ENCODE measurements at regions of chr2 and their contacts with region 1.

Region 1: DNA sequence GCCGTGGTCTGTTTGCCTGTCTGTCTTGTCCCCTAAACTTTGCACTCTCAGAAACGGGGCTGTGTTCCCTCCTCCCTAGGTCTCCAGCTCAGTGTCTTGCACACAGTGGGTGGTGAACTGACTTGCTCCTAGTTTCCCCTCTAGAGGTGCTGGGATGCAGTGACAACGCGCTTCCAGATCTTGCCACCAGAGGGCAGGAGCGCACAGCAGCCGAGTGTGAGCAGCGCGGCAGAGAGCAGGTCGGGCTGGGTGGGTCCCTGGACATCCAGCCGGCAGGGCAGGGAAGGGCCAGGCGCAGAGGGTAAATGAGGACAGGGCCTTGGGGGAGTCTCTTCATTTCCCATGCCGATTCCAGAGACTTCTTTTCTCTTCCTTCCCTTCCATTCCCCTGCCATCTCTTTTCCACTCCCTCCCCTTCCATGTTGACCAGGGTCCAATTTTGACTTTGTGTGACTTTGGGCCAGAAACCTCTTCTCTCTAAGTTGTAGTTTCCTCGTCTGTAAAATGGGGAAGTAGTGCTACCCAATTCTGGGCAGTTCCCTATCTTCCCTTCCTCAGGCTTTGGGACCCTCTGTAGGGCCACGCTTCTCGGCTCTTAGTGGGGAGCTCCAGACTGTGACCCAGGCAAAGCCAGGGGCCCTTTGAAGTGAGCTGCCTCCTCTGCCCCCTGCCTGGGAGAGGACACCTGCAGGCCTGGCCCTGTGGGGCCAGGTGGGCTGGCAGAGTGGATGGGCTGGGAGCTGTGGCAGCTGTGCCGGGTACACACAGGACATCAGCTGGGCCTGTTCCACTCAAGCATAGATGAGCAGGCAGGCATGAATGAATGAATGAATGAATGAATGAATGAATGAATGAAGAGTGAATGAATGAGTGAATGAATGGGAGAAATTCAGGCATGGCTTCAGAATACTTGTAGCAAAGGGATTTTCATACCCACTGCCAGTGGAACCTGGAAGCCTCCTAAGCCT is 43.3 kb upstream of the TAF1B start:
- DNase-seq: peak; percentile 85 to 93
- ATAC-seq: peak; percentile 75 to 92
- H3K4me3 ChIP-seq: no peak overlapping the region
- H3K27ac ChIP-seq: peak overlapping the region; percentile 34 to 87; a peak in 5 of 6 replicates
- H3K4me1 ChIP-seq: peaks cover 30% of the 10 kb centered on the region
- CTCF ChIP-seq: peak; percentile 98
- EP300 ChIP-seq: no peak
- POLR2A ChIP-seq: no peak
- RAD21 ChIP-seq: peak; percentile 92 to 97

Region 2: DNA sequence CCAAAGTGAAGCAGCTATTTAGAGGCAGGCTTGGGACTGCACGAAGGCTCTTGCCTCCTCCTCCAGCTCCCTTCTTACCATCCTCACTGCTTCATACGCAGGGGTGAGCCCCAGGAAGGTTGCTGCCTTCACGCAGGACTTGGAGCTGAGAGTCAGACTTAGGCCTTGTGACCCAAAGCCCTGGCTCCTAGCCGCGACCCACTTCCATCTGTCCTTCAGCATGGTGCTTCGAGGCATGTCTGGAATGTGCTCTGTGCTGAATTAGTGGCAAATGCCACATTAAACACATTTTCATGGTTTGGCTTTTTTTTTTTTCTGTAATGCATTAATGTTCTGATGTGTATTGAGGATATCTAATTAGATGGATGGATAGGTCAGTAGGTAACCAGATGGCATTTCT is 414.1 kb before region 1 on chr2:
- CTCF ChIA-PET with region 1: no interaction called
- POLR2A ChIA-PET with region 1: no interaction called
- DNase-seq: no peak
- ATAC-seq: no peak
- H3K4me3 ChIP-seq: no peak overlapping the region
- H3K27ac ChIP-seq: peak overlapping the region; percentile 63 to 76
- H3K4me1 ChIP-seq: peaks cover 63% of the 10 kb centered on the region
- CTCF ChIP-seq: no peak
- EP300 ChIP-seq: no peak
- POLR2A ChIP-seq: no peak
- RAD21 ChIP-seq: no peak

Region 3: DNA sequence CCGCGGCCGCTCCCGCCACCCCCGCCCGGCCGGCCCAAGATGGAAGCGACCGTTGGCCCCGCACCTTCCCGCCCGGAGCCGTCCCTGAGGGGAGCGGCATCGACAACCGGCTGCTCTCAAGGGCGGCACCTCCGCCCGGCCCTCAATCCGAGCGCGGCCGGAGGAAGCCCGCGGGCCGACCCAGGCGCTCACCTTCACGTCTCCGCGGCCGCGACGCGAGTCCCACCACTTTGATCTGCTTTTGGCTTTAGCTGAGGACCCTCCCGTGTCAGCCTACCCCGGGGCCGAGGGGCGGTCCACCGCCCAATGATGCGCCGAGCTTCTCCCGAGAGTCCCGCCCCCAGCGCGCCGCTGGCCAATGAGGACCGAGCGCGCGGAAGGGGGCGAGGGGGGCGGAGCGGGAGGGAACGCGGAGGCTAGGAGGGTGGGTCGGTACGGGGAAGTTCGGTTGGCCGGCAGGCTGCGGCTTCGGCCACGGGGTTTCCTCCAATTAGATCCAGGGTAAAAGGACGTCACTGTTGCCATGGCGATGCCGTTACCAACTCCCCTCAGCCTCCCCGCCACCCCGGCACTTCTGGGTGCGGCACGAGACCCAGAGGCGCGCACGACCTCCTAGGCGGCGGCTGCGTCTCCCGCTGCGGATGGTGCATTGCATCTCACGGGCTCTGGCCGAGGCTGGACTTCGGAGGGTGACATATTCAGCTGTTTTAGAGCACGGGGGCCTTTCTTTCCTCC is 169.0 kb before region 1 on chr2 and contains the start of gene YWHAQ:
- CTCF ChIA-PET with region 1: interaction called, 13 read pairs
- POLR2A ChIA-PET with region 1: interaction called, 5 read pairs
- DNase-seq: peak; percentile 99
- ATAC-seq: peak; percentile 88 to 94
- H3K4me3 ChIP-seq: peak within 1 kb of the TSS; percentile 93
- H3K27ac ChIP-seq: peak within 1 kb of the TSS; percentile 96 to 97
- H3K4me1 ChIP-seq: peaks cover 40% of the 10 kb centered on the region
- CTCF ChIP-seq: no peak
- EP300 ChIP-seq: no peak
- POLR2A ChIP-seq: peak; percentile 98
- RAD21 ChIP-seq: peak; percentile 22 to 40; a peak in 3 of 5 replicates
- polyA plus RNA-seq, gene YWHAQ: 672 and 833 TPM in 2 replicates

Region 4: GRCh38 chr2:9675415-9676351 is 124.3 kb before region 1 on chr2:
- CTCF ChIA-PET with region 1: no interaction called
- POLR2A ChIA-PET with region 1: no interaction called
- DNase-seq: peak; percentile 65 to 83
- ATAC-seq: peak; percentile 88 to 89
- H3K4me3 ChIP-seq: peak overlapping the region; percentile 19; the same call in 2 of the 3 replicates
- H3K27ac ChIP-seq: peak overlapping the region; percentile 79 to 85
- H3K4me1 ChIP-seq: peaks cover 30% of the 10 kb centered on the region
- CTCF ChIP-seq: no peak
- EP300 ChIP-seq: no peak
- POLR2A ChIP-seq: no peak
- RAD21 ChIP-seq: 0 out of 5 replicates have a peak, but pooled peaks of 1 of the 2 experiments have one; percentile 22

Region 5: GRCh38 chr2:9720352-9721093 is 79.4 kb before region 1 on chr2:
- CTCF ChIA-PET with region 1: no interaction called
- POLR2A ChIA-PET with region 1: no interaction called
- DNase-seq: no peak
- ATAC-seq: no peak
- H3K4me3 ChIP-seq: no peak overlapping the region
- H3K27ac ChIP-seq: no peak overlapping the region
- H3K4me1 ChIP-seq: no peaks in the 10 kb centered on the region
- CTCF ChIP-seq: no peak
- EP300 ChIP-seq: no peak
- POLR2A ChIP-seq: no peak
- RAD21 ChIP-seq: no peak

Region 6: GRCh38 chr2:9778012-9778411 is 21.9 kb before region 1 on chr2:
- CTCF ChIA-PET with region 1: interaction called, 202 read pairs
- POLR2A ChIA-PET with region 1: no interaction called
- DNase-seq: peak; percentile 45 to 56
- ATAC-seq: peak; percentile 61 to 85; a peak in 5 of 6 replicates
- H3K4me3 ChIP-seq: no peak overlapping the region
- H3K27ac ChIP-seq: no peak overlapping the region
- H3K4me1 ChIP-seq: 0 out of 3 replicates have a peak, but pooled peaks cover 4% of the 10 kb centered on the region
- CTCF ChIP-seq: peak; percentile 21; the same call in 1 of the 3 replicates
- EP300 ChIP-seq: no peak
- POLR2A ChIP-seq: no peak
- RAD21 ChIP-seq: peak; percentile 29 to 31; a peak in 2 of 5 replicates

Region 7: GRCh38 chr2:9843229-9844035 is 43.5 kb after region 1 on chr2 and contains the start of gene TAF1B:
- CTCF ChIA-PET with region 1: interaction called, 22 read pairs
- POLR2A ChIA-PET with region 1: interaction called, 10 read pairs
- DNase-seq: peak; percentile 95 to 96
- ATAC-seq: peak; percentile 96 to 97
- H3K4me3 ChIP-seq: peak within 1 kb of the TSS; percentile 73
- H3K27ac ChIP-seq: peak within 1 kb of the TSS; percentile 95
- H3K4me1 ChIP-seq: peaks cover 18% of the 10 kb centered on the region; the same call in 2 of the 3 replicates
- CTCF ChIP-seq: no peak
- EP300 ChIP-seq: no peak
- POLR2A ChIP-seq: peak; percentile 76
- RAD21 ChIP-seq: no peak
- polyA plus RNA-seq, gene TAF1B: 40.8 and 51.7 TPM in 2 replicates

Region 8: DNA sequence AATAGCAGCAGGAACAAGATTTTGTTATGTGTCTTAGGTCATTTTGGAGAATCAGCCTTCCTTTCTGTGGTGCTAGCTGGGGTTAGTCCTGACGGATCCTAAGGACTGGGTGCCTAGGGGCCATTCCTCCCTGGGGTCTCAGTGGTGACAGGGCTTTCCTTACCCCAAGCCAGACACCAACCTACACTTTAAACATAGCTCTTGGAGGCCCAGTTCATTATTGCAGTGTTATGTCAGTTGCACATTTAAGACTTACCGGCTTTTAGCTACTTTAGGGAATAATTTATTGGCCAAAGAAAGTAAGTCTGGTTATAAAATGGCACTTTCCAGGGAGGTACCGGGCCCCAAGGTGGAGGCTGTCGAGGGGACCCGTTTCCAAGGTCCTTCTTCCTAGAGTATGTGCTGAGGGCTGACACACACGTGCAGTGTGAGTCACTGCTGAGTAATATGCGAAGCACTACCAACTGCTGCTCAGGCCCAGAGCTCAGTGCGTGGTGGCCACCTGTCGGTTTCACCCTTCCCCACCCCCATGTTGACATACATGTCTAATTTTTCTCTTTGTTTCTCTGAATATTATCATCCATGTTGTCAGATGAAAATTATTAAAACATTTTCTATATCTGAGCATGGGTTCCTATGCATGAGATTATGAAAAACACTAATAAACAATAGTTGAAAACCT is 114.6 kb after region 1 on chr2:
- CTCF ChIA-PET with region 1: interaction called, 47 read pairs
- POLR2A ChIA-PET with region 1: no interaction called
- DNase-seq: peak; percentile 60 to 77
- ATAC-seq: peak; percentile 99 to 100
- H3K4me3 ChIP-seq: no peak overlapping the region
- H3K27ac ChIP-seq: peak overlapping the region; percentile 34 to 58; a peak in 5 of 6 replicates
- H3K4me1 ChIP-seq: peaks cover 12% of the 10 kb centered on the region
- CTCF ChIP-seq: peak; percentile 59
- EP300 ChIP-seq: no peak
- POLR2A ChIP-seq: no peak
- RAD21 ChIP-seq: peak; percentile 68 to 74

Region 9: GRCh38 chr2:10036095-10036884 is 236.3 kb after region 1 on chr2:
- CTCF ChIA-PET with region 1: interaction called, 29 read pairs
- POLR2A ChIA-PET with region 1: no interaction called
- DNase-seq: peak; percentile 84 to 95
- ATAC-seq: peak; percentile 88 to 94
- H3K4me3 ChIP-seq: no peak overlapping the region
- H3K27ac ChIP-seq: peak overlapping the region; percentile 53 to 83
- H3K4me1 ChIP-seq: peaks cover 16% of the 10 kb centered on the region
- CTCF ChIP-seq: peak; percentile 62
- EP300 ChIP-seq: no peak
- POLR2A ChIP-seq: no peak
- RAD21 ChIP-seq: peak; percentile 43; a peak in 3 of 5 replicates

Measured in A549 (cell line).